Mammary epithelial cell (primary cell): ENCODE measurements at regions of chr9 and their contacts with region 1.

Region 1: GRCh38 chr9:93929231-93929630 is 25.9 kb downstream of the BARX1 start:
- DNase-seq: no peak
- H3K4me3 ChIP-seq: no peak overlapping the region
- H3K27ac ChIP-seq: no peak overlapping the region
- H3K4me1 ChIP-seq: no peaks in the 10 kb centered on the region
- H3K27me3 ChIP-seq: peaks cover 1% of the 10 kb centered on the region
- CTCF ChIP-seq: no peak

Region 2: DNA sequence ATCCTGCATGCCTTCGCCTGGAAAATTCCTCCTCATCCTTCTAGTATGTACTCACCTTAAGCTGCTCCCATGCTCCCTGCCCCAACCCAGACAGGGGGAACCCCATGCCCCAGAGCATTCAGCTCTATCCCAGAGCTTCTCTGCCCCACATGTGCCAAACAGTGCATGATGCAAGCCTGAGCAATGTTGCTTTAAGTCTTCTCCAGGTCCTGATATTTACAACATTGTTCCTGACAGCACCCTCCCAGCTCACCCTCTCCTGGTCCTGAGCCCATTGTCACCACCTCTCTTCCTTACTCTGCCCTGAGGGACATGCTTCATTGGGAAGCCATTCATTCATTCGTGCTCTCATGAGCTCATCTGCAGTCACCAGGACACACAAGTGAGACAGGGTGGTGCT is 49.3 kb after region 1 on chr9:
- CTCF ChIA-PET with region 1: no interaction called
- dilution Hi-C with region 1: loop called (anchors 5 kb)
- in situ Hi-C with region 1: no loop called
- intact Hi-C with region 1: no loop called
- DNase-seq: no peak
- H3K4me3 ChIP-seq: no peak overlapping the region
- H3K27ac ChIP-seq: no peak overlapping the region
- H3K4me1 ChIP-seq: peaks cover 10% of the 10 kb centered on the region
- H3K27me3 ChIP-seq: no peaks in the 10 kb centered on the region
- CTCF ChIP-seq: no peak